Posterior cingulate gyrus (tissue), 11 donors: ENCODE measurements at regions of chr5 and their contacts with region 1.

Region 1: GRCh38 chr5:112757468-112758208 is 20.0 kb downstream of the APC start:
- DNase-seq: no peak

Region 2: GRCh38 chr5:111618623-111619271 is 1138.9 kb before region 1 on chr5:
- intact Hi-C with region 1: no loop called
- DNase-seq: no peak

Region 3: DNA sequence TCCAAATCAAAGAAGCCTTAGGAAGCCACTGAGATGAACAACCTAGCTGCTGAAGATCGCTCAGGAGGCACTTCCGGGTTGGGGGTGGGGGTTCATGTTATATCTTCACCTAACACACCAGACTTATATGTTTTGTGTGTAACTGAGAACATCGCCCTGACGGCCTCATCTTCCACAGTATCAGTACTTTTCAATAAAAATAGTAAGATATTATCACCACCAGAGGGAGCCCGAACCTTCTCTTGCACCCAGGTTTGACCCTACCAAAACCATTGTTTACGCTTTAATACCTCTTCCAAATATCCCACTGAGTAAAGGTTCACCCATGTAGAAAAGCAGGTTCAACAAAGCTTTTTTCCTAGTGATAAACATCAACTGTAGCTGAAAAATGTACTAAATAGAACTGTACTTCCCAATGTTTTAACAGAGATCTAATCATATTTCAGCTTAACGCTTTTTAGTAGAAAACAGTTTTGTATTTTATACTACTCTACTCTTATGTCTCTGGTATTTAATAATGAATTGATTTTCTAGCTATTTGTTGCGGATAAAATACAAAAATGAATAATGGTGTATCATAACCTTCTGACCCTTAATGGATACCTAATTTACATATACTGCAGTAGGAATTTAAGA is 582.6 kb before region 1 on chr5:
- intact Hi-C with region 1: loop called (anchors 10 kb)
- DNase-seq: peak in 1 of 10 donors; percentile 31

Region 4: DNA sequence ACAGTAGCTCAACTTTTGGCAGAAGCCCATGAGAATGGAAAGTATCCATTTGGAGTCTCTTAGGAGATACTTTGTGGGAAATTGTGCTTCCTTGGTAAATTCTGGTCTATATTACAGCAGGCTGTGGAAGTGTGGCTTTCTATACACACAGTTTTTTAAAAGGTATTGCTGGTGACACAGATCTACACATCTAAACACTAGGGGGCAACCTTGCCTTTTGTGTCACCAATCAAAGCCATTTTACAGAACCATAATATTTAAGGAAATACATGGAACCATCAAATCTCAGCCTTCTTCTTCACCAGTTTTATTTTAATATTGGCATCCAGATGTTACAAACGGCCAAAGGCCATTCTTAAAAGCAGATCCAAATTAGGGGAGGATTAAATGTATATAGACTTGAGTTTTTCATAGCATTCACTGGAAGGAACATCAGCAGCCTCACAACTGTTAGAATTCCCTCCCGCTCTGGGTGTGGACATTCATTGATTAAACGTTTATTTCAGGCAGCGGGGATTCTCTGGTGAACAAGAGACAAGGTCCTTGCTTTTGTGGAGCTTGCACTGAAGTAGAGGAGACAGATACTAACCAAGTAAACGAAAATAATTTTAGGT is 206.1 kb before region 1 on chr5:
- intact Hi-C with region 1: loop called (anchors 1 kb)
- DNase-seq: peak in 2 of 10 donors; percentile 20 to 45

Region 5: GRCh38 chr5:112691758-112692157 is 65.9 kb before region 1 on chr5:
- intact Hi-C with region 1: loop called (anchors 2 kb)
- DNase-seq: no peak

Region 6: DNA sequence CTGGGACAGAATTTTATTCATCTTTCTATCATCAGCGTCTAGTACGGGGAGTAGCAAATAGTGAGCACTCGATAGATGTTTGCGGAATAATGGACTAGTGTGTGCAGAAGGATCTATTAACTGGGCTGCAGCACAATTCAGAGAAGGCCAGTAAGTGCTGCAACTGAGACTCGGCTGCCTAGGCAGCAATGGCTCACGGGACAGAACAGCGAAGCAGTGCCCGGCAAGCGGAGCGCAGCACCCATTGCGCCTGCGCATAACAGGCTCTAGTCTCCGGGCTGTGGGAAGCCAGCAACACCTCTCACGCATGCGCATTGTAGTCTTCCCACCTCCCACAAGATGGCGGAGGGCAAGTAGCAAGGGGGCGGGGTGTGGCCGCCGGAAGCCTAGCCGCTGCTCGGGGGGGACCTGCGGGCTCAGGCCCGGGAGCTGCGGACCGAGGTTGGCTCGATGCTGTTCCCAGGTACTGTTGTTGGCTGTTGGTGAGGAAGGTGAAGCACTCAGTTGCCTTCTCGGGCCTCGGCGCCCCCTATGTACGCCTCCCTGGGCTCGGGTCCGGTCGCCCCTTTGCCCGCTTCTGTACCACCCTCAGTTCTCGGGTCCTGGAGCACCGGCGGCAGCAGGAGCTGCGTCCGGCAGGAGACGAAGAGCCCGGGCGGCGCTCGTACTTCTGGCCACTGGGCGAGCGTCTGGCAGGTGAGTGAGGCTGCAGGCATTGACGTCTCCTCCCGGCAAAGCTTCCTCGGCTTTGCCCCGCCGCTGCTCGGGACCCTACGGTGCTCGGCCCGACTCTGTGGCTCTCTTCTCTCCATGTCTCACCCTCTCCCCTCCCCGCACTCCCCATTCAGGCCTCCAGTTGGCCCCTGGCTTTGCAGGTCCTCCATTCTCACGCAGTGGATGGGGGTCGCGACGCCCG is 50.2 kb before region 1 on chr5:
- intact Hi-C with region 1: loop called (anchors 5 kb)
- DNase-seq: peak; percentile 96 to 100 (median 98)

Region 7: GRCh38 chr5:112921833-112922817 is 164.5 kb after region 1 on chr5 and contains the start of gene REEP5:
- intact Hi-C with region 1: loop called (anchors 5 kb)
- DNase-seq: peak; percentile 60 to 97 (median 81)